A673 (cell line): ENCODE measurements at regions of chr10 and their contacts with region 1.

Region 1: GRCh38 chr10:74120911-74121310 is 29.7 kb downstream of the AP3M1 start:
- DNase-seq: no peak
- H3K4me3 ChIP-seq: no peak overlapping the region
- H3K27ac ChIP-seq: no peak overlapping the region
- H3K4me1 ChIP-seq: peaks cover 10% of the 10 kb centered on the region
- H3K27me3 ChIP-seq: no peaks in the 10 kb centered on the region
- CTCF ChIP-seq: no peak

Region 2: GRCh38 chr10:73956476-73957359 is 164.2 kb before region 1 on chr10:
- CTCF ChIA-PET with region 1: no interaction called
- POLR2A ChIA-PET with region 1: no interaction called
- intact Hi-C with region 1: no loop called
- DNase-seq: peak; percentile 73
- H3K4me3 ChIP-seq: no peak overlapping the region
- H3K27ac ChIP-seq: peak overlapping the region; percentile 77
- H3K4me1 ChIP-seq: peaks cover 18% of the 10 kb centered on the region
- H3K27me3 ChIP-seq: no peaks in the 10 kb centered on the region
- CTCF ChIP-seq: no peak

Region 3: GRCh38 chr10:73974309-73974946 is 146.5 kb before region 1 on chr10:
- CTCF ChIA-PET with region 1: no interaction called
- POLR2A ChIA-PET with region 1: no interaction called
- intact Hi-C with region 1: no loop called
- DNase-seq: no peak
- H3K4me3 ChIP-seq: no peak overlapping the region
- H3K27ac ChIP-seq: no peak overlapping the region
- H3K4me1 ChIP-seq: peaks cover 17% of the 10 kb centered on the region
- H3K27me3 ChIP-seq: no peaks in the 10 kb centered on the region
- CTCF ChIP-seq: no peak

Region 4: DNA sequence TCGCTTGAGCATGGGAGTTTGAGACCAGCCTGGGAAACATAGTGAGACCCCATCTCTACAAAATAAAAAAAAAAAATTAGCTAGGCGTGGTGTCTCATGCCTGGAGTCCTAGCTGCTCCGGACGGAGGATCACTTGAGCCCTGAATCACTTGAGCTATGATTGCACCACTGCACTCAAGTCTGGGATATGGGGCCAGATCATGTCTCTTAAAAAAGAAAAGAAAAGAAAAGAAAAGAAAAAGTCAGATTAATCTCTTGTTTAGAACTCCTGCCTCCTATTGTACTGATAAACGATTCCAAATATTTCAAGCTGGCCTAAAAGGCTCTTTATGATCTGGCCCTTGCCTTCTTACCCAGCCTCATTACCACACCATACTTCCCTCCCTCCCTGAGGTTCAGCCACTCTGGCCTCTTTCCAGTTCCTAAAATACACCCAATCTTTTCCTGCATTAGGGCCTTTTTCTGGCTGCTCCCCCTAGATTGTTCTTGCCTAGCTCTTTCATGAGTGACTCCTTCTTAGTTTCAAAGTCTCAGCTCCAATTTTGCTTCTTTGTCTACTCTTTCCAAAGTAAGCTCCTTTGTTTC is 81.3 kb before region 1 on chr10:
- CTCF ChIA-PET with region 1: no interaction called
- POLR2A ChIA-PET with region 1: no interaction called
- intact Hi-C with region 1: no loop called
- DNase-seq: peak; percentile 37
- H3K4me3 ChIP-seq: no peak overlapping the region
- H3K27ac ChIP-seq: peak overlapping the region; percentile 34
- H3K4me1 ChIP-seq: peaks cover 40% of the 10 kb centered on the region
- H3K27me3 ChIP-seq: no peaks in the 10 kb centered on the region
- CTCF ChIP-seq: no peak

Region 5: GRCh38 chr10:74234569-74234968 is 113.7 kb after region 1 on chr10:
- CTCF ChIA-PET with region 1: no interaction called
- POLR2A ChIA-PET with region 1: no interaction called
- intact Hi-C with region 1: loop called (anchors 10 kb)
- DNase-seq: no peak
- H3K4me3 ChIP-seq: no peak overlapping the region
- H3K27ac ChIP-seq: no peak overlapping the region
- H3K4me1 ChIP-seq: peaks cover 29% of the 10 kb centered on the region
- H3K27me3 ChIP-seq: no peaks in the 10 kb centered on the region
- CTCF ChIP-seq: peak; percentile 65

Region 6: DNA sequence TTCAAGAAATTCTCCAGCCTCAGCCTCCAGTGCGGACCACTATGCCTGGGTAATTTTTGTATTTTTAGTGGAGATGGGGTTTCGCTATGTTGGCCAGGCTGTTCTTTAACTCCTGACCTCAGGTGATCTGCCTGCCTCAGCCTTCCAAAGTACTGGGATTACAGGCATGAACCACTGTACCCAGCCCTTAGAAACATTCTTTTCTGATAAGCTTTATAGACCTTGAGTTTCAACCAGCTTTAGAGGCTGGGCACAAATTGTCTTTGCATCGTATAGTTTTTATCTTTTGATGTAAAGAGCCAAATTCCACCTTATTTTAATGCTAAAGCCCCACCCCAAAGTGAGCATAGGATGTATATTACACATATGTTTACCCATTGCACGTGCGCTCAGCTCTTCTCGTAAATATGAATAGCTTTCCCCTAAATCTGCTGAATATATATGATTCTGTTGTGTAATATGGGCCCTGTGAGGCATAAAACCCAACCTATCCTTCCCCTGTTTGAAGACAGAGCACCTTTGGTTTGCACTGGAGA is 154.9 kb after region 1 on chr10:
- CTCF ChIA-PET with region 1: no interaction called
- POLR2A ChIA-PET with region 1: no interaction called
- intact Hi-C with region 1: no loop called
- DNase-seq: no peak
- H3K4me3 ChIP-seq: no peak overlapping the region
- H3K27ac ChIP-seq: no peak overlapping the region
- H3K4me1 ChIP-seq: peaks cover 8% of the 10 kb centered on the region
- H3K27me3 ChIP-seq: no peaks in the 10 kb centered on the region
- CTCF ChIP-seq: no peak